Ovary (tissue), 10 donors: ENCODE measurements at regions of chr10 and their contacts with region 1.

Region 1: GRCh38 chr10:33193057-33193700 is 141.3 kb downstream of the NRP1 start:
- DNase-seq: peak; percentile 77 to 90 (median 85)
- H3K4me3 ChIP-seq: no peak overlapping the region
- H3K27ac ChIP-seq: peak overlapping the region in 1 of 2 donors; percentile 58
- H3K4me1 ChIP-seq: peaks cover 10% of the 10 kb centered on the region
- H3K27me3 ChIP-seq: no peaks in the 10 kb centered on the region
- CTCF ChIP-seq: peak; percentile 60 to 74 (median 72)
- EP300 ChIP-seq: no peak
- POLR2A ChIP-seq: no peak

Region 2: GRCh38 chr10:33164060-33164709 is 29.0 kb before region 1 on chr10:
- intact Hi-C with region 1: no loop called
- DNase-seq: no peak
- H3K4me3 ChIP-seq: no peak overlapping the region
- H3K27ac ChIP-seq: no peak overlapping the region
- H3K4me1 ChIP-seq: no peaks in the 10 kb centered on the region
- H3K27me3 ChIP-seq: no peaks in the 10 kb centered on the region
- CTCF ChIP-seq: no peak
- EP300 ChIP-seq: no peak
- POLR2A ChIP-seq: no peak

Region 3: DNA sequence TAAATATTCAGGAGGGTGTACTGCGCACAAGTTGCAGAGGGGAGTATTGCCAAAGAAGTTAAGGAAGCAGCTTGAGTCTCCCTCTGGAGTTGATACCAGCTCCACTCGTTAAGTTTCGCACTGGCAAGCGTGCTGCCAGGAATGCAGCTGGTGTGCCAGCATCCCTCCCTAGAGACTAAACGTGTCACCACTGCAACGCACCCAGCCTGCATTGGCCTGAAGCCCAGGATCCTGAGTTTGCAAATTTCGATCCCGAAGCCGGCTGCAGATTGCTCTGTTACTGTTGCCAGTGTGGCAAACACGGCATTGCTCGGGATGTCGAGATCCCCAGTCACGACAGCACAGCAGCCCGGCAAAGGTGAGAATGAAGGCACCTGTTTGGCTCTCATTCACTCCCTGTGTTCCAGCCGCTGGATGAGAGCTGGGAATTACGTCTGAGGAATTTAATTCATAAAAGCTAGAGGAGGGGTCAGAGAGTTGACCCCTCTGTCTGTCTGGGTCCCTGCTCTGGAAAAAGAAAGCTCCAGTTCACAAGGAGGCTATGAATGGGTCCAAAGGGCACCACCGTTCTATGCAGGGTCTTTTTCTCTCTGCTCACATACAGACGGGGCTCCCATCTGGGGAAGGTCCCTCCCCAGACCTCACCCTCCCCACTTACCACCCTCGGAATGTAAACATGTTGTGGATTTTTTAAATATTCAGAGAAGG is 80.3 kb after region 1 on chr10:
- intact Hi-C with region 1: loop called in 1 of 4 experiments (anchors 10 kb)
- DNase-seq: peak; percentile 74 to 87 (median 76)
- H3K4me3 ChIP-seq: peak overlapping the region; percentile 18
- H3K27ac ChIP-seq: peak overlapping the region; percentile 7 to 61
- H3K4me1 ChIP-seq: peaks cover 16% of the 10 kb centered on the region
- H3K27me3 ChIP-seq: peaks cover 3% of the 10 kb centered on the region
- CTCF ChIP-seq: peak in 1 of 3 donors; percentile 16
- EP300 ChIP-seq: no peak
- POLR2A ChIP-seq: no peak

Region 4: DNA sequence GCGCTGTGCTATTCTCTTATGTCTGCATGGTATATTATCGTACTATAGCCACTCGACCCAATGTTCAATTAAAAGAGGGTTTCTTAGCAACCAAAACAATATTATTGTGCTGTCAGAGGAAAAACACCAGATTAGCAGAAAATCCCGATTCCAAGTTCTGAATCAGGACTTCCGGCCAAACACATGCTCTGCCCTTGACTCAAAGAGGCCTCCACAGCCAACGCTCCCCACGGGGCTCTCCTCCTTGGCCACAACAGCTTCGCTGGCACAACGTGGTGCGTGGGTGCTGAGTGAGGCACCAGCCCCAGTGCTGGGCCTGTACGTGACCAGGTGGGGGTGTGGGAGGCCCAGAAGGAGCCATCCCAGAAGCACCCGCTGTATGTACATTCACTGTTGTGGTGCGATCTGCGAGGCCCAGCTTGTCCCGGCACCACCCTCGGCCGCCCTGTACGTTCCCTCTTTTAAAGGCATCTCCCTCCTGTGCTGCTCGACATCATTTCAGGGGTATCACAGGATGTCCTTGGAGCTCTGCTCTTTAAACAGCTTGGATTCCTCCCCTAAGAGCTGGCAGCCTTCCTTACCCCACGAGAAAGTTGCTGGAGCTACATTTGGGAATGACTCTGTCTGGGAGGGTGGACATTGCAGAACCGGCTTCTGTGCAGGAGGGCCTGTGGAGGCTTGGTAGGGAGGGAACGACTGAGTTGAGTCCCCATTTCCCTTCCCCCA is 885.7 kb after region 1 on chr10:
- intact Hi-C with region 1: loop called in 1 of 4 experiments (anchors 10 kb)
- DNase-seq: peak; percentile 81 to 88 (median 84)
- H3K4me3 ChIP-seq: no peak overlapping the region
- H3K27ac ChIP-seq: peak overlapping the region; percentile 20 to 82
- H3K4me1 ChIP-seq: peaks cover 30% of the 10 kb centered on the region
- H3K27me3 ChIP-seq: no peaks in the 10 kb centered on the region
- CTCF ChIP-seq: peak in 1 of 3 donors; percentile 10
- EP300 ChIP-seq: no peak
- POLR2A ChIP-seq: no peak

Region 5: DNA sequence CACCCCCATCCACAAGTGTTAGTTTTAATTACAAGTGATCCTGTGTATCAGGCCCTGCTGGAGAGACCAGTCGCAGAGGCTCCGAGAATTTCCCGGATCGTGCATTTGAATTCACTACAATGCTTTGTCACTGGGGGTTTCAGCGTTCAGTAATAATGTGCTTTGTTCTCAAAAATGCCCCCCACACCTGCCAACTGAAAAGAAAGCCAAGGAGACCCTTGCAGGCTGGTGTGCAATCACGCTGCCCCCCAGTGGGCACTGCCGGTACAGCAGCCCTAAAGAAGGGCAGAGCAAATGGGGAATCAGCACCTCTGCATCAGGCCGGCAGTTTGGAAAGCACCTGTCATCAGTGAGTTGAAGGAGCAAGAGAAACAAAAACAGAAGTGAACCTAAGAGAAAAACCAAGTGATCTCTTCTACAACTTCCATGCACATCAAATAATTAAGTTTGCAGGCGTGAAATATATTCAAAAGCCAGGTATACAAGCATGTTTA is 1444.3 kb after region 1 on chr10:
- intact Hi-C with region 1: loop called in 3 of 4 experiments (anchors 5 to 10 kb)
- DNase-seq: peak; percentile 55 to 82 (median 74)
- H3K4me3 ChIP-seq: no peak overlapping the region
- H3K27ac ChIP-seq: no peak overlapping the region
- H3K4me1 ChIP-seq: peaks cover 2% of the 10 kb centered on the region
- H3K27me3 ChIP-seq: no peaks in the 10 kb centered on the region
- CTCF ChIP-seq: peak; percentile 68 to 86 (median 84)
- EP300 ChIP-seq: no peak
- POLR2A ChIP-seq: no peak